ENCODE measurements at regions of chr2 and their contacts with region 1.

Region 1: DNA sequence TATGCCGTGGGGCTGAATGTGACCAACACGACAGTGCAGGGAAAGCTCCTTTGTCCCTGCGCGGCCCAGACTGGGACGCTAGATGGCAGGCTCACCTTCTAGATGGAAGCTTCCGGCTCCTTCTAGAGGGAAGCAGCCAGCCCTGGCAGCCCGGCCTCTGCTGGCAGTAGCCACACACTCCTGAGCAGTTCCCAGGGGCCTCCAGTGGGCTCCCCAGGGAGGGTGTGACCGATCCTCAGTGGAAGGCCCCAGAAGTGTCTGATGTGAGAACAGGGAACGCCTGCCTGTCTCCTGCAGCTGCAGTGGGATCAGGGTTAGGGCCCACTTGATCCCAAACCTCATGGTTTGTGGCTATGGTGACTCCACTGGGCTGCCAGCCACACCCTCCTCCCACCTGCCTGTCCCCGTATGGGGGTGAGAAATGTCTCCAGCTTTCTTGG is 48.5 kb upstream of the LRPPRC start:
- DNase-seq: peak; percentile 74 to 84
- ATAC-seq: peak; percentile 96 to 99
- H3K4me3 ChIP-seq: peak overlapping the region in 1 of 4 donors; percentile 17
- H3K27ac ChIP-seq: peak overlapping the region; percentile 44 to 58 (median 48)
- H3K4me1 ChIP-seq: peaks cover 3 to 4% of the 10 kb centered on the region in 2 donors
- H3K27me3 ChIP-seq: no peaks in the 10 kb centered on the region
- CTCF ChIP-seq: peak; percentile 74 to 93 (median 90)
- POLR2A ChIP-seq: no peak

Region 2: DNA sequence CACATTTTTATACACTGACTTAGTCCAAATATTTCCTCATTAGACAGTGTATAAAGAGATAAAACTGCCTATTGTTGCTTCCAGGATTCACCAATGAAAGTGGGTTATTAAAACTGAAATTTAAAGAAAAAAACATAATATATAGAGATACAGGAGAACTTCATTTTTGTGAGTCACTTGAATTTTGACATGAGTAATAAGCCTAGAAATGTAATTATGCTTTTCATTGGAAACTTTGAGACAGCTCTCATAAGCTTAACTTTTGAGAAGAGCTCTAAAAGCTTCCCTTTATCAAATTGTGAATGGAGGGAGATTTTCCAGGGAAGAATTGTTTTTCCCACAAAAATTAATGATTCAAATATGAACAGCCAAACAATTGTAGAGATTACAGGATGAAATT is 256.4 kb before region 1 on chr2:
- in situ Hi-C with region 1: no loop called
- intact Hi-C with region 1: no loop called
- DNase-seq: no peak
- ATAC-seq: no peak
- H3K4me3 ChIP-seq: no peak overlapping the region
- H3K27ac ChIP-seq: no peak overlapping the region
- H3K4me1 ChIP-seq: no peaks in the 10 kb centered on the region
- H3K27me3 ChIP-seq: no peaks in the 10 kb centered on the region
- CTCF ChIP-seq: no peak
- POLR2A ChIP-seq: no peak

Region 3: DNA sequence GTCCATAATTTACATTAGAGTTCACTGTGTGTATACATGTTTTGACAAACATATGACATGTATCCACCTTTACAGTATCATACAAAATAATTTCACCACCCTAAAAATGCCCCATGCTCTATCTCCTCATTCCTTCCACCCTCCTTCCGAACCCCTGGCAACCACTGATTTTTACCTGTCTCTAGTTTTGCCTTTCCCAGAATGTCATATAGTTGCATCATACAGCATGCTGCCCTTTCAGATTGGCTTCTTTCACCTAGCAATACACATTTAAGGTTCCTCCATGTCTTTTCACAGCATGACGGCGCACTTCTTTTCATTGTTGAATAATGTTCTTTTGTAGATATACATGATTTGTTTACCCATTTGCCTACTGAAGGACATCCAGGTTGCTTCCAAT is 58.9 kb before region 1 on chr2:
- in situ Hi-C with region 1: no loop called
- intact Hi-C with region 1: no loop called
- DNase-seq: no peak
- ATAC-seq: no peak
- H3K4me3 ChIP-seq: no peak overlapping the region
- H3K27ac ChIP-seq: no peak overlapping the region
- H3K4me1 ChIP-seq: no peaks in the 10 kb centered on the region
- H3K27me3 ChIP-seq: no peaks in the 10 kb centered on the region
- CTCF ChIP-seq: no peak
- POLR2A ChIP-seq: no peak

Region 4: GRCh38 chr2:44075541-44075940 is 31.2 kb after region 1 on chr2:
- in situ Hi-C with region 1: no loop called
- intact Hi-C with region 1: loop called (anchors 2 kb)
- DNase-seq: peak; percentile 75 to 93
- ATAC-seq: peak; percentile 98 to 99
- H3K4me3 ChIP-seq: no peak overlapping the region
- H3K27ac ChIP-seq: peak overlapping the region; percentile 86 to 95 (median 90)
- H3K4me1 ChIP-seq: peaks cover 13 to 19% of the 10 kb centered on the region in 2 donors
- H3K27me3 ChIP-seq: no peaks in the 10 kb centered on the region
- CTCF ChIP-seq: no peak
- POLR2A ChIP-seq: peak in 1 of 2 donors; percentile 25

Region 5: GRCh38 chr2:44191739-44192138 is 147.4 kb after region 1 on chr2:
- in situ Hi-C with region 1: no loop called
- intact Hi-C with region 1: no loop called
- DNase-seq: no peak
- ATAC-seq: no peak
- H3K4me3 ChIP-seq: no peak overlapping the region
- H3K27ac ChIP-seq: no peak overlapping the region
- H3K4me1 ChIP-seq: peaks cover 38 to 48% of the 10 kb centered on the region in 2 donors
- H3K27me3 ChIP-seq: no peaks in the 10 kb centered on the region
- CTCF ChIP-seq: no peak
- POLR2A ChIP-seq: no peak

Region 6: GRCh38 chr2:44291281-44292248 is 247.3 kb after region 1 on chr2:
- in situ Hi-C with region 1: loop called in 3 of 4 experiments (anchors 10 kb)
- intact Hi-C with region 1: loop called (anchors 1 kb)
- DNase-seq: peak; percentile 27 to 38
- ATAC-seq: peak; percentile 91 to 93
- H3K4me3 ChIP-seq: peak overlapping the region in 3 of 4 donors; percentile 10 to 32 (median 29)
- H3K27ac ChIP-seq: no peak overlapping the region
- H3K4me1 ChIP-seq: peaks cover 7 to 10% of the 10 kb centered on the region in 2 donors
- H3K27me3 ChIP-seq: no peaks in the 10 kb centered on the region
- CTCF ChIP-seq: peak; percentile 48 to 68 (median 64)
- POLR2A ChIP-seq: no peak

Region 7: DNA sequence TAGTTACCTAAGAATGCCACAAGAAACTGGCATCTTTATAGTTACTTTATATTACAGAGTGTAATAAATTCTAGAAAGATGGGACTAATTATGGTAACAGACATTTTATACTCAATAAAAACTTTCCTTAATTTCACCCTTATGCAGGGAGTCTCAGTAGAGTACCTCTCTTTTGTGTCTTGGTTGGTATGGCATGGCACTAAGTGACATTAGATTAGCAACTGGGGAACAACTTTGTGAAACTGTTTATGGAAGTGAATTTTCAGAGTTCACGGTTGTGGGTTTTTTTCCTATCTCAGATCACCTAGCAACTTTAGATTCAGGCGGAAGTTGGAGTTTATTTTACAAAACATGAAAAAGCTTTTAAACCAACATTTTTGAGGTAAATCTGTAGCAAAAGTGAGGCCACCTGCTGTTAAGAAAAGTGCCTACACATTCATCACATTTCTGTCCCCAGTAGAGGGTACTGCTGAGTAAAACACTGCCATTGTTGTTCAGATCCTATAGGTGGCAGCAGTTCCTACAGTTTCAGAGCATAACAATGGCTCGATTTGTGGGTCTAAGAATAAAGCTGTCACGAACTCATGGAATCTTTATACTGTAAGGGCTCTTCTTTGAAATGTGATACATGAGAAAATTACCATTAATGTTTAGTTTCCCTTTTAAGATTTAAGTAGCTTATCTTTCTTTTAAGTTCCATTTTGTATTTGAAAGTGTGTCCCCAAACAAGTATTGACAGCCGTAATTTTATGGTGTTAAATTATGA is 435.0 kb after region 1 on chr2:
- in situ Hi-C with region 1: loop called in 2 of 4 experiments (anchors 25 kb)
- intact Hi-C with region 1: loop called (anchors 2 kb)
- DNase-seq: peak in 1 of 2 donors; percentile 13
- ATAC-seq: peak; percentile 99 to 100
- H3K4me3 ChIP-seq: no peak overlapping the region
- H3K27ac ChIP-seq: no peak overlapping the region
- H3K4me1 ChIP-seq: peaks cover 3 to 6% of the 10 kb centered on the region in 2 donors
- H3K27me3 ChIP-seq: no peaks in the 10 kb centered on the region
- CTCF ChIP-seq: peak; percentile 80 to 98 (median 94)
- POLR2A ChIP-seq: no peak

Region 8: GRCh38 chr2:44955593-44956392 is 911.5 kb after region 1 on chr2:
- in situ Hi-C with region 1: loop called in 1 of 4 experiments (anchors 25 kb)
- intact Hi-C with region 1: loop called (anchors 5 kb)
- DNase-seq: peak; percentile 43 to 52
- ATAC-seq: peak; percentile 58 to 68
- H3K4me3 ChIP-seq: peak overlapping the region; percentile 43 to 48 (median 45)
- H3K27ac ChIP-seq: no peak overlapping the region
- H3K4me1 ChIP-seq: peaks cover 10 to 11% of the 10 kb centered on the region in 2 donors
- H3K27me3 ChIP-seq: peaks cover 29 to 39% (median 38%) of the 10 kb centered on the region in 3 donors
- CTCF ChIP-seq: peak; percentile 70 to 96 (median 89)
- POLR2A ChIP-seq: no peak